Left cardiac atrium (tissue), 4 donors: ENCODE measurements at regions of chr1 and their contacts with region 1.

Region 1: GRCh38 chr1:62068978-62069377 is 125.7 kb upstream of the L1TD1 start:
- DNase-seq: no peak
- ATAC-seq: peak; percentile 89 to 90

Region 2: GRCh38 chr1:61869691-61870109 is 199.3 kb before region 1 on chr1:
- intact Hi-C with region 1: loop called in 1 of 2 experiments (anchors 5 kb)
- DNase-seq: peak; percentile 35
- ATAC-seq: peak; percentile 55

Region 3: GRCh38 chr1:61931587-61932279 is 137.2 kb before region 1 on chr1:
- intact Hi-C with region 1: no loop called
- DNase-seq: no peak
- ATAC-seq: no peak

Region 4: DNA sequence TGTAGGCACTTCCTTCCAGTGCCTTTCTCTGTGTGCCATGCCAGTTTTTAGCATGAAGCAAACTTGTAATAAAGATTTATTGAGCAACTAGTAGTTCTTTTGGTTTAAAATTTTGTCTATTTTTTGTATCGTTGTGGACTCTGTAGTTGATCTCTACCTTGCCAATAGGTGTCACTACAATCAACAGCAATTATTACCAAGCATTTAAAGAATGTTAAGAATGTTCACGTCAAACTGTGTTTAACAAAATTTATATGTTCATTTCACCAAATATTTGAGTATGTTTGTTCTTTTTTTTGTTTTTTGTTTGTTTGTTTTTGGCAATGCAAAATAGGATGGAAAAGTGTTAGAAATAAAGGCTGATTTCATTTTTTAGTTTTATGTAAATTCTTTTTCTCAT is 118.6 kb before region 1 on chr1:
- intact Hi-C with region 1: loop called in 1 of 2 experiments (anchors 5 kb)
- DNase-seq: no peak
- ATAC-seq: peak in 1 of 2 donors; percentile 29